ENCODE measurements at regions of chr2 and their contacts with region 1.

Region 1: GRCh38 chr2:173997269-173997668 is 32.1 kb upstream of the SP3 start:
- DNase-seq: peak; percentile 88 to 91
- ATAC-seq: peak; percentile 95 to 97
- H3K4me3 ChIP-seq: no peak overlapping the region
- H3K27ac ChIP-seq: peak overlapping the region; percentile 16 to 60 (median 57)
- H3K4me1 ChIP-seq: peaks cover 0 to 19% of the 10 kb centered on the region in 2 donors
- H3K27me3 ChIP-seq: no peaks in the 10 kb centered on the region
- CTCF ChIP-seq: no peak
- POLR2A ChIP-seq: peak in 1 of 2 donors; percentile 32

Region 2: GRCh38 chr2:174012347-174013314 is 15.4 kb after region 1 on chr2:
- in situ Hi-C with region 1: no loop called
- intact Hi-C with region 1: no loop called
- DNase-seq: peak; percentile 63 to 67
- ATAC-seq: peak; percentile 66 to 67
- H3K4me3 ChIP-seq: peak overlapping the region; percentile 48 to 60 (median 56)
- H3K27ac ChIP-seq: peak overlapping the region; percentile 78 to 87 (median 80)
- H3K4me1 ChIP-seq: peaks cover 9 to 19% of the 10 kb centered on the region in 2 donors
- H3K27me3 ChIP-seq: no peaks in the 10 kb centered on the region
- CTCF ChIP-seq: no peak
- POLR2A ChIP-seq: peak; percentile 32 to 52

Region 3: DNA sequence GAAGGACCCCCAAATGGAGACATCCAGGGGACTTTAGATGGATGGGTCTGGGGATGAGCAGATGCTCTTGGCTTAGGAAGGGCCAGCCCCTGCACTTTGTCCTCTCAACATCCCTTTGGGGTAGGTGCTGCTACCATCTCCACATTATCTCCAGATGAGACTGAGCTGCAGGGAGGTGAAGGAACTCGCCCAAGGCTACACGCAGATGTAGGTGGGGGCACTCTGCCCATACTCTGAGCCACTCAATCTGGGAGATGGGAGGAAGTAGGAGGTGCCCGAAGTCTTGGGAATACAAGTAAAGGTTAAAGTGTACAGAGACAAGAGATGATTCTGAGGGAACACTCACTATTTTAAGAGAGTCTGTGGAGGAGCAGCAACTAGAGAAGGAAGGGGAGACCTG is 36.8 kb after region 1 on chr2:
- in situ Hi-C with region 1: no loop called
- intact Hi-C with region 1: loop called (anchors 5 kb)
- DNase-seq: no peak
- ATAC-seq: no peak
- H3K4me3 ChIP-seq: no peak overlapping the region
- H3K27ac ChIP-seq: no peak overlapping the region
- H3K4me1 ChIP-seq: peaks cover 11 to 30% of the 10 kb centered on the region in 2 donors
- H3K27me3 ChIP-seq: no peaks in the 10 kb centered on the region
- CTCF ChIP-seq: no peak
- POLR2A ChIP-seq: no peak

Measured in gastrocnemius medialis (tissue), 4 donors.